ENCODE measurements at regions of chr22 and their contacts with region 1.

Region 1: GRCh38 chr22:25447686-25448434 is 116.6 kb upstream of the GRK3 start:
- DNase-seq: peak; percentile 83
- H3K4me3 Mint-ChIP-seq: peak overlapping the region; percentile 92
- H3K27ac Mint-ChIP-seq: peak overlapping the region; percentile 97
- H3K4me1 Mint-ChIP-seq: peaks cover 35% of the 10 kb centered on the region
- H3K27me3 Mint-ChIP-seq: no peaks in the 10 kb centered on the region

Region 2: GRCh38 chr22:25362215-25362882 is 85.5 kb before region 1 on chr22:
- intact Hi-C with region 1: loop called (anchors 2 kb)
- DNase-seq: peak; percentile 55
- H3K4me3 Mint-ChIP-seq: no peak overlapping the region
- H3K27ac Mint-ChIP-seq: peak overlapping the region; percentile 8
- H3K4me1 Mint-ChIP-seq: peaks cover 5% of the 10 kb centered on the region
- H3K27me3 Mint-ChIP-seq: no peaks in the 10 kb centered on the region

Region 3: GRCh38 chr22:25404928-25405816 is 42.7 kb before region 1 on chr22:
- intact Hi-C with region 1: loop called (anchors 5 kb)
- DNase-seq: peak; percentile 68
- H3K4me3 Mint-ChIP-seq: peak overlapping the region; percentile 85
- H3K27ac Mint-ChIP-seq: peak overlapping the region; percentile 46
- H3K4me1 Mint-ChIP-seq: peaks cover 31% of the 10 kb centered on the region
- H3K27me3 Mint-ChIP-seq: no peaks in the 10 kb centered on the region

Region 4: GRCh38 chr22:25475257-25476022 is 27.6 kb after region 1 on chr22:
- intact Hi-C with region 1: no loop called
- DNase-seq: no peak
- H3K4me3 Mint-ChIP-seq: no peak overlapping the region
- H3K27ac Mint-ChIP-seq: no peak overlapping the region
- H3K4me1 Mint-ChIP-seq: peaks cover 13% of the 10 kb centered on the region
- H3K27me3 Mint-ChIP-seq: no peaks in the 10 kb centered on the region

Region 5: DNA sequence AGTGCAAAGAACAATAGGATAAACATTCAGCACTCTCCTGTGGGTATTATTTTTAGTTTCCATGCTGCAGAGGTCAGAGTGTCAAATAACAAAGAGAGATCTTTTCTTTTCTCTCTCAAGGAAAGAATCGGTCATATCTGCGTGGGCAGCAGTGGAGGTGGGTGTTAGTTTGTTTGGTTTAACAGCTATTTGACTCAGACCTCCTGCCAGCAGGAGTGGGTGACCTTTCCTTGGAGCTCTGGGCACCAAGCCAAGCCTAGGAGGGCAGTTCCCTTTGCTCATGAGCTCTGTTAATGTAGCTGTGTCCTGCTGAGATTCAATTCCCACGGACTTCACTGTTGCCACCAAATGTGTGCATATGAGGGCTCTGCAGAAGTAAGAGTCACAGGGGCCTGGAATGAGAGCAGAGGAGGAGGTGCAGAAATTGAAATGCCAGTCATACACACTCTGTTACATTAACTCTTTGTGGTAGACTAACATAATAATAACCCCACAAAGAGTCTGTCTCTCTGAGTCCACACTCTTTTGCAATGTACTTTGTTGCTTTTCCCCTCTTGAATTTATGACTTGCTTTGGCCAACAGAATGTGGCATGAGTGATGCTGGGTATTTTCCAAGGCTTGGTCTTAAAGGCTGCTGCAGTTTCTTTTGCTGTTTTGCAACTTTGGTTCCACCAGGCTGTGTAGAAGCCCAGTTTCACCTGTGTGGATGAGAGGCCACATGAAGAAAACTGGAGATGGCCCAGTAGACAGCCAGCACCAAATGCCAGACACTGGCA is 40.6 kb after region 1 on chr22:
- intact Hi-C with region 1: no loop called
- DNase-seq: no peak
- H3K4me3 Mint-ChIP-seq: peak overlapping the region; percentile 59
- H3K27ac Mint-ChIP-seq: peak overlapping the region; percentile 94
- H3K4me1 Mint-ChIP-seq: peaks cover 54% of the 10 kb centered on the region
- H3K27me3 Mint-ChIP-seq: no peaks in the 10 kb centered on the region

Region 6: GRCh38 chr22:25777870-25778269 is 330.0 kb after region 1 on chr22:
- intact Hi-C with region 1: loop called (anchors 5 kb)
- DNase-seq: no peak
- H3K4me3 Mint-ChIP-seq: no peak overlapping the region
- H3K27ac Mint-ChIP-seq: peak overlapping the region; percentile 1
- H3K4me1 Mint-ChIP-seq: peaks cover 10% of the 10 kb centered on the region
- H3K27me3 Mint-ChIP-seq: no peaks in the 10 kb centered on the region